PC-9 (cell line): ENCODE measurements at regions of chr2 and their contacts with region 1.

Region 1: DNA sequence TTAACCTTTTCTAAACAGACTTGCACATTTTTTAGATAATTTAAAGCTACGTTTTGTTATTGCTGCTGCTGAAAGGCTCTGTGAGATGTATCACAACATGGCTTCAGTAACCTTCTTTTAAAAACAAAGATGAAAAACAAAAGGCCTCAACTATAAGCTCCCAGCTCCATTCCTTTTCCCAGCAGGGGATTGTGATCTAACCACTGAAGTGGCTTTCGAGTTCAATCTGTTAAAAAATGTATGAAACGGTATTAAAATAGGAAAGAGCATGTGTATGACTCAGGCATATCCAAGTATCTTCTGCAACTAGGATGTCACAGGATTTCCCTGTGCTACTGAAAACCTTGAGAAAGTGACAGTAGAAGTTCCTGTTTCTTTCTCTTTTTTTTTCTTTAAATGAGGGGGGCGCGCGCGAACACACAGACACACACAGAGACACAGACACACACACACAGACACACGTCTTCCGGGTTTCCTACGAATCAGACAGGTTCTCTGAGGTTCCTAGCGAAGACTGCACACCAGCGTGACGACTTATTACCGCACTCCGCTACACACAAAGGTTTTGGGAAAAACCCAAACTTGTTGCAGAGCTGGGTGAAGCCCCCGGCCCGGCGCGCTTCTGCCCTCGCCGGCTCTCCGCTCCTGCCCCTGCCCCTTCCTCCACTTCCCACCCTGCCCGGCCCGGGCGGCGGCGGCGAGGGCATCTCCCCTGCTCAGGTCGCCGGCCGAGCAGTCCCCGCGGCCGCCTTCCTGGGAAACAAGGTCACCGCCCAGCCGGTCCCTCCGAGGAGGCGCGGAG is 86.8 kb downstream of the RBMS1 start:
- DNase-seq: peak; percentile 31 to 56
- H3K4me3 ChIP-seq: peak overlapping the region; percentile 71
- H3K27ac ChIP-seq: peak overlapping the region; percentile 79
- H3K4me1 ChIP-seq: peaks cover 54% of the 10 kb centered on the region
- H3K27me3 ChIP-seq: no peaks in the 10 kb centered on the region
- CTCF ChIP-seq: no peak

Region 2: DNA sequence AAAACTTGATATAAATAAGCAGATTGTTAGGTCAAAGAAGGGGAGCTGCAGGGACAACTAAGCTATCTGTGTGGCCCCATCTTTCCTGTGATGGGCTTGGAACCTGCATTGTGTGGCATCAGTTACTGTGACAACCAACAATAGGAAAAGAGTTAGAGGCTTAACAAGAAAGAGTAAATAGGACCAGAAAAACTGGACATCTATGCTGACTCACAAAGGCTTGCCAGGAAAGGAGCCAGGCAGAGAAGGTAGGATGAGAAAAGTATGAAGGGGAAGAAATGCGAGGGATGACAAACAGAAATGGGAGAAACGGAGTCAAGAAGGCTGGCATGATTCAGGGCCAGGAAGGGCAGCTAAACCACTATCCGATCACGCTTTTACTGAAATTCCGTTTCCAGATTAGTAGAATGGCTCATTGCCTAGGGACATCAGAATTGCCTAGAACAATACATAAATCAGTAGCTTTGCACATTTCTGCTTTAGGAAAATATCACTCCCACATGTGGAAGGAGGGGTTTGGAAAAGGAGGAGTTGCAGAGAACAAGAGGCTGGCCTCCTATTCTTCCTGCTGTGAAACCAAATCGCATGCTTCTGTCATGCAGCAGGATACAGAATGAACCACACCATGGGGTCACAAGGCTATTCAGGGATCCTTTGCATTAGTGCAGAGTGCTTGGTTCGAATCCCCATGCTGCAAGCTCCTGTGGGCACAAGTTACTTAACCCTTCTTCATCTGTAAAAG is 351.6 kb before region 1 on chr2:
- CTCF ChIA-PET with region 1: no interaction called
- POLR2A ChIA-PET with region 1: interaction called, 10 read pairs
- intact Hi-C with region 1: no loop called
- DNase-seq: no peak
- H3K4me3 ChIP-seq: no peak overlapping the region
- H3K27ac ChIP-seq: no peak overlapping the region
- H3K4me1 ChIP-seq: no peaks in the 10 kb centered on the region
- H3K27me3 ChIP-seq: no peaks in the 10 kb centered on the region
- CTCF ChIP-seq: no peak

Region 3: GRCh38 chr2:160140471-160140870 is 266.3 kb before region 1 on chr2:
- CTCF ChIA-PET with region 1: no interaction called
- POLR2A ChIA-PET with region 1: no interaction called
- intact Hi-C with region 1: no loop called
- DNase-seq: no peak
- H3K4me3 ChIP-seq: no peak overlapping the region
- H3K27ac ChIP-seq: no peak overlapping the region
- H3K4me1 ChIP-seq: no peaks in the 10 kb centered on the region
- H3K27me3 ChIP-seq: no peaks in the 10 kb centered on the region
- CTCF ChIP-seq: no peak

Region 4: DNA sequence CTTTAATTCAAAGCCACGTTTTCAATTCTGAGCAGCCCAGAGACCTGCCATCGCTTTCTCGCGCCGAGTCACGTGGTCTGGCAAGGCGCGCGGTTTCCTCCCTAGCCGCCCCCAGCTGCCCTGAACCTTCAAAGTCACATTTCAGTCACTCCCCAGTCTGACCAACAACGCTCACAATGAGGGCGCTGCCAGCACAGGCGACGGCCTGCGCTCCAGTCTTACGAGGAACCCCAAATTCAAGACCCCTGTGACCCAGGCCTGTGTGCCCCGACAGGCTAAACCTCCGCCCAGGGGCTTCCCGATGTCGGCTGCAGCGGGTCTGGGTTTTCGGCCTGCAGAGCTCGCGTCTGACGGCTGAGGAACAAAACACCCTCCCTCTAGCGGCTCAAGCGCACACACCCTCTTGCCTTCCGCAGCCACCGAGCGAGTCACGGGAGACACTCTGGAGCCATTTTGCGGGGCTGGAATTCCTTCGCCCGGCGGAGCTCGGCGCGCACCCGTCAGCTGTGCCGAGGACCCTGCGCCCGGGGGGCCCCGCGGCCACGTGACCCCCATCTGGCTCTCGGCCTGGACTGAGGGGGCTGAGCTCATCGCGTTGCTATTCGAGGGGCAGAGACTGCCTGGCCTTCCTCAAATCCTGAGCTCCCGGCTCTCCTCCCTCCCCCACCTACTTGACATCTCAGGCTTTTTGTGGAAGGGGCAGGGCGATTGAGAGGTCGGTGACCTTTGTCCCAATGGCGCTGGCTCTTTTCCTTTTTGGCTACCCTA is 136.8 kb before region 1 on chr2:
- CTCF ChIA-PET with region 1: no interaction called
- POLR2A ChIA-PET with region 1: no interaction called
- intact Hi-C with region 1: loop called (anchors 5 kb)
- DNase-seq: peak; percentile 78
- H3K4me3 ChIP-seq: peak overlapping the region; percentile 52; the same call in 1 of the 2 replicates
- H3K27ac ChIP-seq: peak overlapping the region; percentile 86
- H3K4me1 ChIP-seq: peaks cover 26% of the 10 kb centered on the region
- H3K27me3 ChIP-seq: no peaks in the 10 kb centered on the region
- CTCF ChIP-seq: peak; percentile 59

Region 5: GRCh38 chr2:160306985-160307384 is 99.8 kb before region 1 on chr2:
- CTCF ChIA-PET with region 1: no interaction called
- POLR2A ChIA-PET with region 1: no interaction called
- intact Hi-C with region 1: no loop called
- DNase-seq: no peak
- H3K4me3 ChIP-seq: no peak overlapping the region
- H3K27ac ChIP-seq: no peak overlapping the region
- H3K4me1 ChIP-seq: no peaks in the 10 kb centered on the region
- H3K27me3 ChIP-seq: no peaks in the 10 kb centered on the region
- CTCF ChIP-seq: no peak

Region 6: GRCh38 chr2:160324161-160324800 is 82.5 kb before region 1 on chr2:
- CTCF ChIA-PET with region 1: no interaction called
- POLR2A ChIA-PET with region 1: no interaction called
- intact Hi-C with region 1: loop called (anchors 5 kb)
- DNase-seq: peak in 1 of 2 experiments; percentile 27
- H3K4me3 ChIP-seq: no peak overlapping the region
- H3K27ac ChIP-seq: no peak overlapping the region
- H3K4me1 ChIP-seq: no peaks in the 10 kb centered on the region
- H3K27me3 ChIP-seq: no peaks in the 10 kb centered on the region
- CTCF ChIP-seq: peak; percentile 70

Region 7: DNA sequence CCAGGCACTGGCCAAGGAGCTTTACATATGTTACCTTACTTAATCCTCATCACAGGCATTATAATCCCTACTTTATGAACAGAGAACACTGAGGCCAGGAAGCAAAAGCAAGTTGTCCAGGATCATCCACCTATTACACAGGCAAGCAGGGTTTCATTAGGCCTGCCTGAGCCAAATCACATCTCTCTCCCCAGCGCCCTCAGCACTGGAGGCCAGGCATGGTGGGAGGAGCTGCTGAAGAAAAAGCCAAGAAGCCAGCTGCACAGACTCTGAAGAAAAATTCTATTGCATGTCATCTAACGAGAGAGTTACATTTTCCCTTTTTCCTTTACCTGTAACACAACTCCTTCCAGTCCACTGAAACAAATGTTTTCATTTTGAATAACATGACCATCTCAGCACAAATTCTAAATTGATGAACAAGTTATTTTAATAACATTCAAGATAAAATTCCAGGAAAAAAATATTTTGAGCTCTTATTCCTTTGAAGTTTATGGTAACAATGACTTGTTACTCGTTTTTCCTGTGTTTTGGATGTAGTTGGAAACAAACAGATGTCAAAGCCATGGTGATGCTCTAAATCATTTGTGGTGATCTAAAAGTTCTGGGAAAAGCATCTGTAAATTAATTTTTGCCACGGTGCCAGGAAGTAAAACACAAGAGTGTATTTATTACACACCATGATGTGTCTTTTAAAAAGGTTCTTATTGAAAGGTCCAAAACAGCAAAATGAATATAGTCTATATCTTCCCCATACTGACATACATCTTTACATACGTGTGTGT is 67.7 kb before region 1 on chr2:
- CTCF ChIA-PET with region 1: no interaction called
- POLR2A ChIA-PET with region 1: no interaction called
- intact Hi-C with region 1: no loop called
- DNase-seq: no peak
- H3K4me3 ChIP-seq: no peak overlapping the region
- H3K27ac ChIP-seq: no peak overlapping the region
- H3K4me1 ChIP-seq: peaks cover 26% of the 10 kb centered on the region
- H3K27me3 ChIP-seq: no peaks in the 10 kb centered on the region
- CTCF ChIP-seq: no peak

Region 8: GRCh38 chr2:160353166-160353565 is 53.6 kb before region 1 on chr2:
- CTCF ChIA-PET with region 1: no interaction called
- POLR2A ChIA-PET with region 1: no interaction called
- intact Hi-C with region 1: loop called (anchors 10 kb)
- DNase-seq: no peak
- H3K4me3 ChIP-seq: no peak overlapping the region
- H3K27ac ChIP-seq: no peak overlapping the region
- H3K4me1 ChIP-seq: peaks cover 43% of the 10 kb centered on the region
- H3K27me3 ChIP-seq: no peaks in the 10 kb centered on the region
- CTCF ChIP-seq: peak; percentile 40; the same call in 1 of the 2 replicates

Region 9: DNA sequence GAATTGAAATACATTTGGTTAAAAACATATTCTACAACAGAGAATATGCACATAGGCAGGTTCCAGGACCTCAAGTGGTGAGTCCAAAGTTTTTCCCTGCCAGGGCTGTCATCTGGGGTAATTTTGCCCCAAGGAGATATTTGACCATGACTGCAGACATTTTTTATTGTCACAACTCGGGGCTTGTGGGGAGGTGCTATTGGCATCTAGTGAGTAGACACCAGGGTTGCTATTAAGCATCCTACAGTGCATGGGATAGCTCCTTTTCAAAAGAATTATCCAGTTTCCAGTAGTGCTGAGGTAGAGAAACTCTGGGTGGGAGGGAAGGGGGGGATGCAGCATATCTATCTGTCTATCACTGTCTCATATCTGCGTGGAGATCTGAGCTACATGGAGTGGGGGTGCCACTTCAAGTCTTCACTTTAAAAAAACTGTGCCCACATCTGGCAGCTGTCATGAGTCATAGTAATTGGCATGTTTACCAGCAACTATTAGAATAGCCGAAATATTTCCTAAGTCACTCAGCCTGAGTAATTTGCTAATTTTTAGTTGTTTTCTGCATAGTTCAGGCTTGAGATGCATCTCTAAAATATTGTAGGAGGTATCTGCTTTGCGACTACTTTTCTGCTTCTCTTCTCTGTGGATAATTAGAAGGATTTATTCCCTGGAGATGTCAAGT is 340.8 kb after region 1 on chr2:
- CTCF ChIA-PET with region 1: no interaction called
- POLR2A ChIA-PET with region 1: no interaction called
- intact Hi-C with region 1: loop called (anchors 10 kb)
- DNase-seq: peak; percentile 26 to 75
- H3K4me3 ChIP-seq: 0 out of 2 replicates have a peak overlapping the region, but pooled peaks have one; percentile 9
- H3K27ac ChIP-seq: peak overlapping the region; percentile 59
- H3K4me1 ChIP-seq: peaks cover 50% of the 10 kb centered on the region
- H3K27me3 ChIP-seq: no peaks in the 10 kb centered on the region
- CTCF ChIP-seq: no peak

Region 10: GRCh38 chr2:161017780-161018470 is 611.1 kb after region 1 on chr2:
- CTCF ChIA-PET with region 1: no interaction called
- POLR2A ChIA-PET with region 1: no interaction called
- intact Hi-C with region 1: no loop called
- DNase-seq: no peak
- H3K4me3 ChIP-seq: no peak overlapping the region
- H3K27ac ChIP-seq: no peak overlapping the region
- H3K4me1 ChIP-seq: no peaks in the 10 kb centered on the region
- H3K27me3 ChIP-seq: no peaks in the 10 kb centered on the region
- CTCF ChIP-seq: no peak